GM10248 (cell line): ENCODE measurements at regions of chr7 and their contacts with region 1.

Region 1: GRCh38 chr7:83849131-83849530 is 200.2 kb upstream of the SEMA3E start:
- DNase-seq: no peak
- CTCF ChIP-seq: no peak

Region 2: GRCh38 chr7:83701736-83702135 is 147.4 kb before region 1 on chr7:
- CTCF ChIA-PET with region 1: no interaction called
- POLR2A ChIA-PET with region 1: no interaction called
- DNase-seq: no peak
- CTCF ChIP-seq: no peak

Region 3: GRCh38 chr7:83814480-83814879 is 34.7 kb before region 1 on chr7:
- CTCF ChIA-PET with region 1: no interaction called
- POLR2A ChIA-PET with region 1: no interaction called
- DNase-seq: no peak
- CTCF ChIP-seq: no peak

Region 4: DNA sequence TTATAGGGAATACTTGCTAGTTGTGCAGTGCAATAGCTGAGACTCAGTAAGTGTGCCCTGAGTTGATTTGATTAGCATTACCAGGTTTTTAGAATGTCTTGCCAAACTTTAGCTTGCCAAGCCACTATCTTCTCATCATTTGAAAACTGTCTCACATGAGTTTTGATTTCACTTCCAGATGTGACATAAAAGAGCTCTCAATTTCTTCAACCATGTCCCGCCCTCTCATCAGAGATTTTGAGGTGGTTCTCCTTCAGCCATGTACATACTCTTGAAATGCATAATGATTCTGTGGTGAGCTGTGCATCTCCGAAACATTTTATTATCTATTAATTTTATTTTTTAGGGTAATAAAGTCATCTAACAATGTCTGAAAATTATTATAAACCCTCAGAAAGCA is 14.8 kb after region 1 on chr7:
- CTCF ChIA-PET with region 1: interaction called, 12 read pairs
- POLR2A ChIA-PET with region 1: no interaction called
- DNase-seq: no peak
- CTCF ChIP-seq: no peak